Caco-2 (cell line): ENCODE measurements at regions of chr3 and their contacts with region 1.

Region 1: DNA sequence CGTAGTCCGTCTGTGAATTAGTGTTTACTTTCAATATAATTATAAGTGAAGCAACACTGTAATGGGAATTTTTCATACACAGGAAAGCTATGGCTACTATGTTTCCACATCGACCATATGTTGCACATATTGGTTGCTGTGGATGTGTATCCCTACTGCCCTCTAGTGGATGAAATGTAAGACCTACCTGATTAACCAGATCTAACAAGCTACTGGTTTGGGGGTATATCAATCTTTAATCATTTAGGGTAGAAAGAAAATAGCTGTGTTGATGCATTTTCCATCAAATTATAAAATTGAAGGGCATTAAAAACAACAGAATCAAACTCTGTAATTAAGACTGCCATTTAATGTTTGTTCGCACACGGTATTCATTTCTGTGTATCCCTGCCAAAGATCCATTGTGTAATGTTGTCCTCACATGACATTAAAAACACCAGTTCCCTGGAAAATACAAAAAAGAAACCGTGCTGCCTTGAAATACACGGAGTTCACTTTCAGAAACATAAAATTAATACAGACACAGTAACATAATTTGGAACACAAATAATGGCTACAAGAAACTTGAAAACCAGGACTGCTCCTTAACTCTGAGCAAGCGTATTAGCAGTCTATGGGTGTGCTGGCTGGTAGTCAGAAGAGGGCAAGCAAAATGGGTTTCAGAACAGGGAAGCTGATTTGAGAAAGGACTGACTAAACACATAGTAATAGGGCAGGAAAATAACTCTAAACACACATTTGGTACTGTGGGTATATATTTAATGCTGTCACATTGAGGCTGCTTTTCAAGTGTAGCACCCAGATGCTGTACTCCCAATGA is 125.1 kb downstream of the TIGIT start:
- DNase-seq: peak in 1 of 2 experiments; percentile 57
- H3K4me3 ChIP-seq: no peak overlapping the region
- H3K4me3 Mint-ChIP-seq: no peak overlapping the region
- H3K27ac Mint-ChIP-seq: no peak overlapping the region
- H3K4me1 ChIP-seq: peaks cover 5% of the 10 kb centered on the region; the same call in 1 of the 2 replicates
- H3K4me1 Mint-ChIP-seq: no peaks in the 10 kb centered on the region
- H3K27me3 ChIP-seq: no peaks in the 10 kb centered on the region
- H3K27me3 Mint-ChIP-seq: no peaks in the 10 kb centered on the region
- CTCF ChIP-seq: peak; percentile 70

Region 2: DNA sequence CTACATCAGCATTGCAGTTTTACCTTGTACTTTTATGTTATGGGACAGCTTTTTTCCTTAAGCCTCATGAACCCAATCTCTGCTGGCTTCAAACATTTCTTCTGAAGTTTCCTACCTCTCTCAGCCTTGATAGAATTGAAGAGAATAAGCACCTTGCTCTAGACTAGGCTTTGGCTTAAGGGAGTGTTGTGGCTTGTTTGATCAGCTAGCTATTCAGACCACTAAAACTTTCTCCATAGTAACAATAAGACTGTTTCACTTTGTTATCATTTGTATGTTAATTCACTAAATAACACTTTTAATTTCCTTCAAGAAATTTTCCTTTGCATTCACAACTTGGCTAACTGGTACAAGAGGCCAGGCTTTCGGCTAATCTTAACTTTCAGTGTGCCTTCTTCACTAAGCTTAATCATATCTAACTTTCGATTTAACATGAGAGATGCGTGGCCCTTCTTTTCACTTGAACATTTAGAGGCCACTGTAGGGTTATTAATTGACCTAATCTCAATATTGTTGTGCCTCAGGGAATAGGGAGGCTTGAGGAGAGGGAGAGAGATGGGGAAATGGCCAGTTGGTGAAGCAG is 133.2 kb before region 1 on chr3:
- CTCF ChIA-PET with region 1: no interaction called
- POLR2A ChIA-PET with region 1: no interaction called
- intact Hi-C with region 1: no loop called
- DNase-seq: no peak
- H3K4me3 ChIP-seq: no peak overlapping the region
- H3K4me3 Mint-ChIP-seq: no peak overlapping the region
- H3K27ac Mint-ChIP-seq: no peak overlapping the region
- H3K4me1 ChIP-seq: no peaks in the 10 kb centered on the region
- H3K4me1 Mint-ChIP-seq: no peaks in the 10 kb centered on the region
- H3K27me3 ChIP-seq: no peaks in the 10 kb centered on the region
- H3K27me3 Mint-ChIP-seq: peaks cover 4% of the 10 kb centered on the region
- CTCF ChIP-seq: no peak

Region 3: DNA sequence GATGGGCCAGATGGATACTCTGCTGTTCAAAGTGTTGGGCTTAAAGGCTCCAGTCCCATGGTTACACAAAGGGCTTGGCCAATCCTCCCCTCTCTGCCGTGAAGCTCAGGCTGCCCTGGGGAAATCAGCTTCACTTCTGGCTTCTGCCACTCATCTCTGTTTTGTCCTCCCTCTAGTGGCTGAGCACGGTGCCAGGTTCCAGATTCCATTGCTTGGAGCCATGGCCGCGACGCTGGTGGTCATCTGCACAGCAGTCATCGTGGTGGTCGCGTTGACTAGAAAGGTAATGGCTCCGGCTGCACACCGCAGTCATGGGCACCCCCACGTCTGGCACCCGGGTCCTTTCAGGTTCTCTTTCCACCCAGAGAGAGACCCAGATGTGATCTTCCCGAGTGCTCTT is 119.5 kb before region 1 on chr3:
- CTCF ChIA-PET with region 1: interaction called, 5 read pairs
- POLR2A ChIA-PET with region 1: no interaction called
- intact Hi-C with region 1: loop called (anchors 5 kb)
- DNase-seq: peak; percentile 61 to 64
- H3K4me3 ChIP-seq: no peak overlapping the region
- H3K4me3 Mint-ChIP-seq: peak overlapping the region; percentile 20
- H3K27ac Mint-ChIP-seq: no peak overlapping the region
- H3K4me1 ChIP-seq: no peaks in the 10 kb centered on the region
- H3K4me1 Mint-ChIP-seq: no peaks in the 10 kb centered on the region
- H3K27me3 ChIP-seq: no peaks in the 10 kb centered on the region
- H3K27me3 Mint-ChIP-seq: peaks cover 6% of the 10 kb centered on the region
- CTCF ChIP-seq: peak; percentile 39 to 81

Region 4: DNA sequence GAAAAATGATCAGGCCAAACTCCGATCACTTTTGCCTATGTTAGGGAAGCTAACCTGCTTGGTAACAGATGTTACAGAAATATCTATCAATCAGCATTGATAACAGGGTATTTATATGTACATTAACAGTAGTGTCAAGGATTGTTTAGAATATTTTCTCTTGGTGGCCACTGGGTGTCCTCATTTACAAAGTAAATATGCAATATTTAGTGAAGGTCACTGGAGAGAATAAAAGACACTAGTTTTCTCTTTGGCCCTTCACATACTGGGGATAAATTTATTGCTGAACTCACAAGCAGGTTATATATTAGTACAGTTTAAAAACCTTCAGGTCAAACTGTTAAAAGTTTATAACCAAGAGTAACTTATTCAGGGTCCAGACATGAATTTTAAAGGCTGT is 56.1 kb before region 1 on chr3:
- CTCF ChIA-PET with region 1: interaction called, 26 read pairs
- POLR2A ChIA-PET with region 1: no interaction called
- intact Hi-C with region 1: loop called (anchors 1 kb)
- DNase-seq: peak in 1 of 2 experiments; percentile 13
- H3K4me3 ChIP-seq: no peak overlapping the region
- H3K4me3 Mint-ChIP-seq: no peak overlapping the region
- H3K27ac Mint-ChIP-seq: peak overlapping the region; percentile 72
- H3K4me1 ChIP-seq: no peaks in the 10 kb centered on the region
- H3K4me1 Mint-ChIP-seq: peaks cover 11% of the 10 kb centered on the region
- H3K27me3 ChIP-seq: no peaks in the 10 kb centered on the region
- H3K27me3 Mint-ChIP-seq: no peaks in the 10 kb centered on the region
- CTCF ChIP-seq: peak; percentile 36 to 42

Region 5: GRCh38 chr3:114519415-114519814 is 100.5 kb after region 1 on chr3:
- CTCF ChIA-PET with region 1: no interaction called
- POLR2A ChIA-PET with region 1: no interaction called
- intact Hi-C with region 1: loop called (anchors 5 kb)
- DNase-seq: peak in 1 of 2 experiments; percentile 34
- H3K4me3 ChIP-seq: no peak overlapping the region
- H3K4me3 Mint-ChIP-seq: no peak overlapping the region
- H3K27ac Mint-ChIP-seq: no peak overlapping the region
- H3K4me1 ChIP-seq: peaks cover 10% of the 10 kb centered on the region; the same call in 1 of the 2 replicates
- H3K4me1 Mint-ChIP-seq: no peaks in the 10 kb centered on the region
- H3K27me3 ChIP-seq: no peaks in the 10 kb centered on the region
- H3K27me3 Mint-ChIP-seq: no peaks in the 10 kb centered on the region
- CTCF ChIP-seq: no peak

Region 6: GRCh38 chr3:114697401-114697800 is 278.5 kb after region 1 on chr3:
- CTCF ChIA-PET with region 1: no interaction called
- POLR2A ChIA-PET with region 1: no interaction called
- intact Hi-C with region 1: loop called (anchors 5 kb)
- DNase-seq: no peak
- H3K4me3 ChIP-seq: no peak overlapping the region
- H3K4me3 Mint-ChIP-seq: no peak overlapping the region
- H3K27ac Mint-ChIP-seq: no peak overlapping the region
- H3K4me1 ChIP-seq: no peaks in the 10 kb centered on the region; the same call in 1 of the 2 replicates
- H3K4me1 Mint-ChIP-seq: peaks cover 7% of the 10 kb centered on the region
- H3K27me3 ChIP-seq: no peaks in the 10 kb centered on the region
- H3K27me3 Mint-ChIP-seq: no peaks in the 10 kb centered on the region
- CTCF ChIP-seq: no peak